HCT116 (cell line): ENCODE measurements at regions of chr12 and their contacts with region 1.

Region 1: DNA sequence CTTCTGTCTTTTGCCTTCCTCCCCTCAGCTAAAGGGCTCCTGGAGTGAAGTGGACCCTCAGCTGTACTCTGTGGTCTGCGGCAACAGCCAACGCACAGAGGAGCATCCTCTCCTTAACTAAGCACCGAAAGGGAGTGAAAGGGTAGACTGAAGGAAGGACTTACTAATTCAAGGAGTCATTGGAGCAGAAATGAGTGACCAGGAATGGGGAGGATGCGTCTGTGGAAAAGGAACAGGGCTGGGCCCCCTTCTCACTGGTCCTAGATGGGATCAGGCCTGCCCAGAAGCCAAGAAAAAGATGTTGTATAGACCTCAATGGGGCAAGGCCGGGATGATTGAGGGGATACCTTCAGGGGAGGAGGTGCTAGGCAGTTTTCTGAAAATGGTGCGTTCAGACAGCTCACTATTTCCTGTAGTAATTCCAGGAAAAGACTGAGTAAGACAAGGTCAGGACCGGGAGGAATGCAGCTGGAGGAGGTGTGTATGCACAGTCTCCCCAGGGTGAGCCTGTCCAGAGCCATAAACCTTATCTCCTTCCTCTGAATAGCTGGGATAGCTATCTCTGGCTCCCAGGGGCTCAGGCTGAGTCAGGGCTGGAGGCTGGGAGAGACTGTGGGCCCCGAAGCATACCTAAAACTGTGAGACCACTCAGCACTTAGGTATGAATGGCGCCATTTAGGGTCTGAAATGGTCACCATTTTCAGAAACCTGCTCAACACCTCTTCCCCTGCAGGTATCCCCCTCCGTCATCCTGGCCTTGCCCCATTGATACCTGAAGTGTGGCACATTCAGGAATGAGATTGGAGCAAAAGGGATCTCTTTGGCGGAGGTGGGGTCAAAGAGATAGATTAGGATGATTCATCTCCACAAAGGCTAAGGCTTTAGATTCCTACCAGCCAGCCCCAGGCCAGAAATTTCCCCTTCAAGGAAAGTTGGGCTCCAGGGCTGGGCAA is 20.2 kb upstream of the KRT8 start:
- DNase-seq: peak; percentile 90
- ATAC-seq: peak; percentile 68
- H3K4me3 ChIP-seq: peak overlapping the region; percentile 6 to 51
- H3K27ac ChIP-seq: peak overlapping the region; percentile 95
- H3K4me1 ChIP-seq: peaks cover 67 to 94% of the 10 kb centered on the region in 2 experiments
- H3K27me3 ChIP-seq: no peaks in the 10 kb centered on the region
- CTCF ChIP-seq: no peak
- POLR2A ChIP-seq: no peak
- RAD21 ChIP-seq: no peak

Region 2: GRCh38 chr12:52895061-52895887 is 29.8 kb before region 1 on chr12:
- CTCF ChIA-PET with region 1: interaction called, 3 read pairs
- POLR2A ChIA-PET with region 1: interaction called, 24 read pairs
- RAD21 ChIA-PET with region 1: interaction called in 1 of 2 experiments, 6 read pairs
- intact Hi-C with region 1: no loop called
- DNase-seq: no peak
- ATAC-seq: peak; percentile 50
- H3K4me3 ChIP-seq: no peak overlapping the region
- H3K27ac ChIP-seq: peak overlapping the region; percentile 67
- H3K4me1 ChIP-seq: peaks cover 41 to 47% of the 10 kb centered on the region in 2 experiments
- H3K27me3 ChIP-seq: no peaks in the 10 kb centered on the region
- CTCF ChIP-seq: no peak
- POLR2A ChIP-seq: no peak
- RAD21 ChIP-seq: no peak

Region 3: GRCh38 chr12:52942066-52942900 is 17.2 kb after region 1 on chr12:
- CTCF ChIA-PET with region 1: interaction called, 8 read pairs
- POLR2A ChIA-PET with region 1: interaction called, 116 read pairs
- RAD21 ChIA-PET with region 1: interaction called, 5 to 12 read pairs
- intact Hi-C with region 1: loop called (anchors 1 kb)
- DNase-seq: no peak
- ATAC-seq: no peak
- H3K4me3 ChIP-seq: no peak overlapping the region
- H3K27ac ChIP-seq: no peak overlapping the region
- H3K4me1 ChIP-seq: peaks cover 64 to 68% of the 10 kb centered on the region in 2 experiments
- H3K27me3 ChIP-seq: no peaks in the 10 kb centered on the region
- CTCF ChIP-seq: no peak
- POLR2A ChIP-seq: no peak
- RAD21 ChIP-seq: no peak

Region 4: GRCh38 chr12:52949413-52950331 is 24.6 kb after region 1 on chr12:
- CTCF ChIA-PET with region 1: interaction called, 6 read pairs
- POLR2A ChIA-PET with region 1: interaction called, 116 read pairs
- RAD21 ChIA-PET with region 1: interaction called, 5 to 12 read pairs
- intact Hi-C with region 1: loop called (anchors 1 kb)
- DNase-seq: peak; percentile 84
- ATAC-seq: peak; percentile 61
- H3K4me3 ChIP-seq: peak overlapping the region; percentile 72 to 96
- H3K27ac ChIP-seq: peak overlapping the region; percentile 78
- H3K4me1 ChIP-seq: peaks cover 66 to 87% of the 10 kb centered on the region in 2 experiments
- H3K27me3 ChIP-seq: no peaks in the 10 kb centered on the region
- CTCF ChIP-seq: no peak
- POLR2A ChIP-seq: peak; percentile 90
- RAD21 ChIP-seq: no peak